ENCODE measurements at regions of chr4 and their contacts with region 1.

Region 1: DNA sequence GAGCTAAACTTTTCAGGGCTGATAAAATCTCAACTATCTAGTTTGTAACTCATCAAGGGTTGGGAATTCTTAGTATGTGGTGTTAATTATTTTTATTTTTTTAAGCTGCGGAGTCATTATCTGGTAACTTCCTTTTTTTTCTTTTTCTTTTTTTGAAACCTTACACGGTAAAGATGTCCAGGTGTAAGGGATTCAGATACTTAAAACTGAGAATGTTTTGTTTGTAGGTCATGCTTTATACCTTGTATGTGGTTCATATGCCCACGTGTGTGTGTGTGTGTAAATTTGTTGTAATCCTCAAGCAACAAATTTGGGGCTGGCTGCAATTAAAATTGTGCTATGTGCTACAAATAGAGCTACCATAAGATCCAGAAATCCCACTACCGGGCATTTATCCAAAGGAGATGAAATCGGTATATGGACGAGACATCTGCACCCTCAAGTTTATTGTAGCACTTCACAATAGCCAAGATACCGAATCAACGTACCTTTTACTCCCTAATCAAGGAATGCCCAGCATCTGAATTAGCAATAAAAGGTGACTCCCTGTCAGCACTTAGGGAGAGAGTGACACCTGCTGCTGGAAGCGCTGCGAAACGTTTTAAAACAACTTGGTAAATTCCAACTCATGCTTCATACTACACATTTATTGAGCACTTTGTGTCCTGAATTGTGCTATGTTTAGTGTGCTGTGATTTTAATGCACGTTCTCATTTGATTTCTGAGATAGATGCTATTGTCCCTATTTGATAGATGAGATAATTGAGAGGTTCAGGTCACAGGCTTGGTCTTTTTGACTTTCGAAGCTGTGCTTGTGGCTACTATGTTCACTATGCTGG is 16.1 kb downstream of the MSMO1 start:
- DNase-seq: peak in 1 of 7 donors; percentile 34
- H3K4me3 ChIP-seq: no peak overlapping the region
- H3K27ac ChIP-seq: no peak overlapping the region
- H3K4me1 ChIP-seq: no peaks in the 10 kb centered on the region
- H3K27me3 ChIP-seq: no peaks in the 10 kb centered on the region
- CTCF ChIP-seq: peak in 1 of 6 experiments; percentile 33
- POLR2A ChIP-seq: no peak

Region 2: DNA sequence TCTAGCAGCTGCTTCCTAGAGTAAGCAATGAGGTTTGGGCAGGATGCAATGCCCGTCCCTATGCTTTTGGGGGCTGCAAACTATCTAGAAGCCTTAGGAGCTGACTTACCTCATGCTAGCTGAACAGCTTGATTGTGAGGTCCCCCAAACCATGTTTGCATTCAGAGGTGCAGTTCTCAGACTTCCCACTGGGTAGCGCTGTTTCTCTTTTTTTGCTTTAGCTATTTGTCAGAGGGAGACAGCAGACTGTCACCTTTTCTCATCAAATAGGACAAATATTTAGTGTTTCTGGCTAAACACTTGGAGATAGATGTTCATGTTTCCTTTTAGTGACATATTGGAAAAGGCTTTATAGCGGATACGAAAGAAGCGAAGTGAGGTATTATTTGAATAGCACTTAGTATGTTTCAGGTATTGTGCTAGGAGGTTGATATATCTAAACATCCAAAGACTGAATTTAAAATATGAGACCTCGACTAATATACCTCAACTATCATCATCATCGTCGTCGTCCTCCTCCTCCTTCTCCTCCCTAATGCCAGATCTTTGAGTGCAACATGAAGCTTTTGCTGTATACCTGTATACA is 212.2 kb before region 1 on chr4:
- intact Hi-C with region 1: loop called in 1 of 2 experiments (anchors 10 kb)
- DNase-seq: peak; percentile 31 to 88 (median 70)
- H3K4me3 ChIP-seq: no peak overlapping the region
- H3K27ac ChIP-seq: no peak overlapping the region
- H3K4me1 ChIP-seq: peaks cover 0 to 5% of the 10 kb centered on the region in 2 donors
- H3K27me3 ChIP-seq: no peaks in the 10 kb centered on the region
- CTCF ChIP-seq: peak; percentile 86 to 98 (median 94)
- POLR2A ChIP-seq: no peak